CD8-positive, alpha-beta T cell (primary cell): ENCODE measurements at regions of chr13 and their contacts with region 1.

Region 1: DNA sequence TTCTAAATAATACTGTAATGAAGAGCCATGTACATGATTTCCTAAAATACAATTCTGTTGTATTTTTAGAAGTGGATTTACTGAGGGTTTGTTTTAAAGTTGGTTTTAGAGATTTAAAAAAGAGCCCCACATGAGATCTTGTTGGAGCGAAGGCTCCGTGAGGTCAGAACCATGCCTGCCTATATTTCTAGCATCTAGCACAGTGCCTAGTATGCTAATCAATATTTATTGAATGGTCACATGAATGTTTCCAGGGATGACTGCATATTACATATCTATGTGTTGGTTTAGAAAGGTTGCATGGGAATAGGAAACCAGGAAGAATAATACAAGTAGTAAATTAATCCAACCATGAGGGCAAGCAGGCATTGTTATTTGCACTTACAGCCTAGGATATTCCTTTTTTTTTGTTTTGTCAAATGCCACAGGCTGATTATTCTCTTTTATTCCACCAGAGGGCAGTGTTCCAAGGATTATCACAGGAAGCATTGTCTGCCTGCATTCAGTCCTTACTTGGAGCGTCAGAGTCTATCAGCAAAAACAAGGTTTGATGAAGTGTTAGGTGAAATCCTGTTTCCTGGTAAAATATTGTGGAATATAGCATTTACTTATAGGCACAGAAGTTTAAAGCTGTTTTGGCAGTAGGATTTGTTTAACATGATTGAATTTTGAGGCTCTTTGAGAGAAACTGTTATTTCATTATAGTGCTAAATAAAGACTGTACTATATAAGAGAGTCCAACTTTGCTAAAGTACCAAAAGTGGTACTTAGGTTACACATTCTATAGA is 46.8 kb downstream of the COG3 start:
- DNase-seq: peak in 5 of 9 experiments; percentile 20 to 80 (median 26)
- ATAC-seq: peak; percentile 95
- H3K4me3 ChIP-seq: no peak overlapping the region
- H3K4me3 Mint-ChIP-seq: no peak overlapping the region
- H3K27ac ChIP-seq: no peak overlapping the region
- H3K27ac Mint-ChIP-seq: peak overlapping the region; percentile 52
- H3K4me1 ChIP-seq: no peaks in the 10 kb centered on the region
- H3K4me1 Mint-ChIP-seq: peaks cover 8% of the 10 kb centered on the region
- H3K27me3 ChIP-seq: no peaks in the 10 kb centered on the region
- H3K27me3 Mint-ChIP-seq: no peaks in the 10 kb centered on the region
- CTCF ChIP-seq: peak; percentile 85

Region 2: DNA sequence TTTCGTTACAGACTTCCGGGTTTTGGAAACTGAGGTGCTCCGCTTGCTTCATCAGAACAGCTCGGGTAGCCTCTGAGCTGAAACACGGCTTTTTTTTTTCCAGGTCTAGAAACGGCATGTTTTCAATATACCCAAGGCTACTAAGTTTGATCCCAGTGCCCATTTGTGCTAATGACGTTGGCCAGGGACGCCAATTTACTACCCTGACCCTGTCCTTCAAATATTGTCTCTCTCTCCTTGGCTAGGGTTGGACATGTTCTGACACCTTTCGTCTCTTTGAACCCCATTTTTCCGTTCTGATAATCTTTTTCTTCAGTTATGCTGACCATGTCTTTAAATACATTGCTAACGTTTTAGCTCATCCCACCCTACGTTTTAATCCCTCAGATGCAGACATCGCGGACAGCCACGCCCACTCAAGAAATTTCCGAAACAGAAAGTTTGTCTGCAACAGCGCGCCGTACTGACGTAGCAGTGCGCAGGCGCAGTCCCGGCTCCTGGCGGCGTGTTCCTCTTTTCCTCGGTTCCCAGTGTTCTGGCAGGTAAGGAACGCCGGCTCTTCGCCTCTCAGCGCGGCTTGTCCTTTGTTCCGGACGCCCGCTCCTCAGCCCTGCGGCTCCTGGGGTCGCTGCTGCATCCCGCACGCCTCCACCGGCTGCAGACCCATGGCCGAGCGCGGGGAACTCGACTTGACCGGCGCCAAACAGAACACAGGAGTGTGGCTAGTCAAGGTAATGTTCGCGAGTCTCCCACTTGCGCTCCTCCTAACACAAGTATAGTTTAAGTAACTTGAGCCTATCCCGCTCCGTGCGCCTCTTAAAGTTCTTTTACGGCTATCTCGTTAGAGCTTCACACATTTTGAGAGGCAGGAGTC is 391.3 kb before region 1 on chr13 and contains the start of gene GTF2F2:
- CTCF ChIA-PET with region 1: no interaction called
- POLR2A ChIA-PET with region 1: no interaction called
- intact Hi-C with region 1: no loop called
- DNase-seq: peak; percentile 73 to 94 (median 88)
- ATAC-seq: peak; percentile 65
- H3K4me3 ChIP-seq: peak within 1 kb of the TSS; percentile 70 to 93
- H3K4me3 Mint-ChIP-seq: no peak within 1 kb of the TSS
- H3K27ac ChIP-seq: peak within 1 kb of the TSS; percentile 93 to 97
- H3K27ac Mint-ChIP-seq: no peak within 1 kb of the TSS
- H3K4me1 ChIP-seq: peaks cover 22% of the 10 kb centered on the region
- H3K4me1 Mint-ChIP-seq: peaks cover 20% of the 10 kb centered on the region
- H3K27me3 ChIP-seq: no peaks in the 10 kb centered on the region
- H3K27me3 Mint-ChIP-seq: no peaks in the 10 kb centered on the region
- CTCF ChIP-seq: no peak
- total RNA-seq, gene GTF2F2: 13.2 to 14.8 TPM

Region 3: DNA sequence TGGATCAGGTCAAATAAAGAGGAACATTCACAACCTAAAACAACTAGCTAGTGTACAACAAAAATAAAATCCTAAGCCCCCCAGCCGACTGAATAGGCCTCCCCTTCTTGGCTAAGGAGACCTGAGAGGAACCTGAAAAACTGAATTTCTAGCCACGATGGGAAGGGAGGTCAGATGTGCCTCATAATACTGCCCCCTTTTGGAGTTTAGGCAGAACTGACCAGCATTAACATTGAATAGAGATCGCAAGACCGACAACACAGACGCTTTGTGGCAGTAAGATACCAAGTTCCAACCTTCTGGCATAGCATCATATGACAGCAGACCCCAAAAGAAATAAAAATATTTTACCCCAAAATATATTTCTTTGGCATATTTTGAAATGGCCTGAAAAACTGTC is 206.6 kb after region 1 on chr13:
- CTCF ChIA-PET with region 1: no interaction called
- POLR2A ChIA-PET with region 1: no interaction called
- intact Hi-C with region 1: loop called in 1 of 2 experiments (anchors 2 kb)
- DNase-seq: peak in 1 of 9 experiments; percentile 13
- ATAC-seq: no peak
- H3K4me3 ChIP-seq: no peak overlapping the region
- H3K4me3 Mint-ChIP-seq: no peak overlapping the region
- H3K27ac ChIP-seq: no peak overlapping the region
- H3K27ac Mint-ChIP-seq: no peak overlapping the region
- H3K4me1 ChIP-seq: no peaks in the 10 kb centered on the region
- H3K4me1 Mint-ChIP-seq: no peaks in the 10 kb centered on the region
- H3K27me3 ChIP-seq: no peaks in the 10 kb centered on the region
- H3K27me3 Mint-ChIP-seq: no peaks in the 10 kb centered on the region
- CTCF ChIP-seq: peak; percentile 23